T-cell (primary cell): ENCODE measurements at regions of chr7 and their contacts with region 1.

Region 1: GRCh38 chr7:107168233-107169119 is at the start of gene HBP1:
- DNase-seq: peak; percentile 92 to 100 (median 98)
- ATAC-seq: peak; percentile 84 to 88 (median 86)
- H3K4me3 ChIP-seq: peak within 1 kb of the TSS; percentile 90 to 92
- H3K4me3 Mint-ChIP-seq: peak within 1 kb of the TSS; percentile 93 to 98 (median 94)
- H3K27ac ChIP-seq: peak within 1 kb of the TSS; percentile 96
- H3K27ac Mint-ChIP-seq: peak within 1 kb of the TSS; percentile 99 to 100
- H3K4me1 ChIP-seq: peaks cover 18 to 25% of the 10 kb centered on the region in 2 experiments
- H3K4me1 Mint-ChIP-seq: peaks cover 29 to 44% (median 37%) of the 10 kb centered on the region in 3 donors
- H3K27me3 ChIP-seq: no peaks in the 10 kb centered on the region
- H3K27me3 Mint-ChIP-seq: peaks cover 2 to 5% of the 10 kb centered on the region in 2 donors
- total RNA-seq, gene HBP1: 78.6 to 211 (median 92.0) TPM

Region 2: GRCh38 chr7:106285051-106285854 is 883.2 kb before region 1 on chr7:
- CTCF ChIA-PET with region 1: no interaction called
- POLR2A ChIA-PET with region 1: interaction called in 1 of 2 experiments, 15 read pairs
- DNase-seq: peak; percentile 86 to 100 (median 97)
- ATAC-seq: peak; percentile 88 to 96 (median 92)
- H3K4me3 ChIP-seq: peak overlapping the region; percentile 81 to 97
- H3K4me3 Mint-ChIP-seq: peak overlapping the region; percentile 85 to 97 (median 95)
- H3K27ac ChIP-seq: peak overlapping the region; percentile 91
- H3K27ac Mint-ChIP-seq: peak overlapping the region; percentile 94 to 97
- H3K4me1 ChIP-seq: peaks cover 7 to 12% of the 10 kb centered on the region in 2 experiments
- H3K4me1 Mint-ChIP-seq: peaks cover 30 to 38% (median 35%) of the 10 kb centered on the region in 3 donors
- H3K27me3 ChIP-seq: no peaks in the 10 kb centered on the region
- H3K27me3 Mint-ChIP-seq: peaks cover 0 to 1% of the 10 kb centered on the region in 2 donors

Region 3: DNA sequence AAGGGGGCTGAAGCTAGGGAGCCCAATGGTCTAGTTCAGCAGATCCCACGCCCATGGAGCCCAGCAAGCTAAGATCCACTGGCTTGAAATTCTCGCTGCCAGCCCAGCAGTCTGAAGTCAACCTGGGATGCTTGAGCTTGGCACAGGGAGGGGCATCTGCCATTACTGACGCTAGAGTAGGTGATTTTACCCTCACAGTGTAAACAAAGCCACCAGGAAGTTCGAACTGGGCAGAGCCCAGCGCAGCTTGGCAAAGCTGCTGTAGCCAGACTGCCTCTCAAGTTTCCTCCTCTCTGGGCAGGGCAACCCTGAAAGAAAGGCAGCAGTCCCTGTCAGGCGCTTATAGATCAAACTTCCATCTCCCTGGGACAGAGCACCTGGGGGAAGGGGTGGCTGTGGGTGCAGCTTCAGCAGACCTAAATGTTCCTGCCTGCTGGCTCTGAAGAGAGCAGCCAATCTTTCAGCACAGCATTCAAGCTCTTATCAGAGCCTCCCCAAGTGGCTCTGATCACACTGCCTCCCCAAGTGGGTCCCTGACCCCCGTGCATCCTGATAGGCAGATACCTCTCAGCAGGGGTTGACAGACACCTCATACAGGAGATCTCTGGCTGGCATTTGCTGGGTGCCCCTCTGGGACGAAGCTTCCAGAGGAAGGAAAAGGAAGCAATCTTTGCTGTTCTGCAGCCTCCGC is 675.3 kb before region 1 on chr7:
- CTCF ChIA-PET with region 1: no interaction called
- POLR2A ChIA-PET with region 1: no interaction called
- DNase-seq: no peak
- ATAC-seq: no peak
- H3K4me3 ChIP-seq: no peak overlapping the region
- H3K4me3 Mint-ChIP-seq: no peak overlapping the region
- H3K27ac ChIP-seq: no peak overlapping the region
- H3K27ac Mint-ChIP-seq: no peak overlapping the region
- H3K4me1 ChIP-seq: no peaks in the 10 kb centered on the region
- H3K4me1 Mint-ChIP-seq: no peaks in the 10 kb centered on the region
- H3K27me3 ChIP-seq: peaks cover 0 to 13% of the 10 kb centered on the region in 2 experiments
- H3K27me3 Mint-ChIP-seq: peaks cover 34 to 35% of the 10 kb centered on the region in 2 donors

Region 4: GRCh38 chr7:106767498-106768323 is 400.8 kb before region 1 on chr7:
- CTCF ChIA-PET with region 1: interaction called in 1 of 2 experiments, 5 read pairs
- POLR2A ChIA-PET with region 1: interaction called in 1 of 2 experiments, 10 read pairs
- DNase-seq: peak in 2 of 35 experiments; percentile 6 to 46
- ATAC-seq: peak; percentile 25 to 76 (median 46)
- H3K4me3 ChIP-seq: peak overlapping the region in 1 of 2 donors; percentile 21
- H3K4me3 Mint-ChIP-seq: peak overlapping the region; percentile 63 to 81 (median 64)
- H3K27ac ChIP-seq: peak overlapping the region; percentile 1
- H3K27ac Mint-ChIP-seq: peak overlapping the region; percentile 57 to 85
- H3K4me1 ChIP-seq: peaks cover 4 to 6% of the 10 kb centered on the region in 2 experiments
- H3K4me1 Mint-ChIP-seq: peaks cover 22 to 33% (median 28%) of the 10 kb centered on the region in 3 donors
- H3K27me3 ChIP-seq: no peaks in the 10 kb centered on the region
- H3K27me3 Mint-ChIP-seq: no peaks in the 10 kb centered on the region

Region 5: DNA sequence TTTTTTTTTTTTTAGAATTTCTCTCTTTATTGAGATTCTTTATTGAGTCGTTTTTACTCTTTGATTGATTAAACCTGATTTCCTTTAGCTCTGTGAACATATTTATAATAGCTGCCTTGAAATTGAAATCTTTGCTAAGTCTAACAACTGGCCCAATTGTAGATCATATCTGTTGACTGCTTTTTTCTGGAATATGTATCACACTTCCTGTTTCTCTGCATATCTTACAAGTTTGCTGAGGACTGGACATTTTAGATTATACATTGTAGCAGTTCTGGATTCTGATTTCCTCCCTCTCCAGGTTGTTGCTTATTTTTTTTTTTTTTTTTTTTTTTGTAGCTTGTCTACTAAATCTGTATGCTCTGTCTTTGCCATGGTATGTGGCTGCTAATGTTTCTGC is 67.7 kb before region 1 on chr7:
- CTCF ChIA-PET with region 1: no interaction called
- POLR2A ChIA-PET with region 1: no interaction called
- DNase-seq: no peak
- ATAC-seq: no peak
- H3K4me3 ChIP-seq: no peak overlapping the region
- H3K4me3 Mint-ChIP-seq: no peak overlapping the region
- H3K27ac ChIP-seq: no peak overlapping the region
- H3K27ac Mint-ChIP-seq: no peak overlapping the region
- H3K4me1 ChIP-seq: peaks cover 2% of the 10 kb centered on the region in 2 experiments
- H3K4me1 Mint-ChIP-seq: peaks cover 3 to 6% (median 4%) of the 10 kb centered on the region in 3 donors
- H3K27me3 ChIP-seq: peaks cover 0 to 3% of the 10 kb centered on the region in 2 experiments
- H3K27me3 Mint-ChIP-seq: peaks cover 10 to 27% of the 10 kb centered on the region in 2 donors

Region 6: GRCh38 chr7:107180378-107180777 is 11.9 kb after region 1 on chr7:
- CTCF ChIA-PET with region 1: interaction called in 1 of 2 experiments, 21 read pairs
- POLR2A ChIA-PET with region 1: interaction called, 11 to 76 read pairs
- DNase-seq: peak in 24 of 35 experiments; percentile 8 to 67 (median 21)
- ATAC-seq: peak; percentile 21 to 81 (median 54)
- H3K4me3 ChIP-seq: no peak overlapping the region
- H3K4me3 Mint-ChIP-seq: peak overlapping the region in 2 of 3 donors; percentile 13 to 32
- H3K27ac ChIP-seq: no peak overlapping the region
- H3K27ac Mint-ChIP-seq: peak overlapping the region; percentile 45 to 79
- H3K4me1 ChIP-seq: peaks cover 4 to 12% of the 10 kb centered on the region in 2 experiments
- H3K4me1 Mint-ChIP-seq: peaks cover 61 to 65% (median 63%) of the 10 kb centered on the region in 3 donors
- H3K27me3 ChIP-seq: no peaks in the 10 kb centered on the region
- H3K27me3 Mint-ChIP-seq: no peaks in the 10 kb centered on the region

Region 7: GRCh38 chr7:107194049-107194448 is 25.6 kb after region 1 on chr7:
- CTCF ChIA-PET with region 1: interaction called, 4 to 9 read pairs
- POLR2A ChIA-PET with region 1: interaction called, 10 to 15 read pairs
- DNase-seq: no peak
- ATAC-seq: no peak
- H3K4me3 ChIP-seq: no peak overlapping the region
- H3K4me3 Mint-ChIP-seq: no peak overlapping the region
- H3K27ac ChIP-seq: no peak overlapping the region
- H3K27ac Mint-ChIP-seq: peak overlapping the region; percentile 2 to 5
- H3K4me1 ChIP-seq: no peaks in the 10 kb centered on the region
- H3K4me1 Mint-ChIP-seq: peaks cover 5 to 14% (median 8%) of the 10 kb centered on the region in 3 donors
- H3K27me3 ChIP-seq: no peaks in the 10 kb centered on the region
- H3K27me3 Mint-ChIP-seq: no peaks in the 10 kb centered on the region

Region 8: GRCh38 chr7:107879400-107880035 is 711.0 kb after region 1 on chr7:
- CTCF ChIA-PET with region 1: interaction called in 1 of 2 experiments, 11 read pairs
- POLR2A ChIA-PET with region 1: interaction called in 1 of 2 experiments, 5 read pairs
- DNase-seq: peak in 14 of 35 experiments; percentile 16 to 70 (median 25)
- ATAC-seq: peak; percentile 64 to 78 (median 73)
- H3K4me3 ChIP-seq: no peak overlapping the region
- H3K4me3 Mint-ChIP-seq: no peak overlapping the region
- H3K27ac ChIP-seq: no peak overlapping the region
- H3K27ac Mint-ChIP-seq: no peak overlapping the region
- H3K4me1 ChIP-seq: peaks cover 4 to 6% of the 10 kb centered on the region in 2 experiments
- H3K4me1 Mint-ChIP-seq: peaks cover 3 to 30% (median 27%) of the 10 kb centered on the region in 3 donors
- H3K27me3 ChIP-seq: peaks cover 0 to 8% of the 10 kb centered on the region in 2 experiments
- H3K27me3 Mint-ChIP-seq: peaks cover 3 to 6% of the 10 kb centered on the region in 2 donors